ENCODE measurements at regions of chr3 and their contacts with region 1.

Region 1: GRCh38 chr3:11379233-11379823 is 107.1 kb downstream of the ATG7 start:
- DNase-seq: no peak
- H3K4me3 ChIP-seq: no peak overlapping the region
- CTCF ChIP-seq: peak; percentile 22

Region 2: GRCh38 chr3:11116336-11117059 is 262.8 kb before region 1 on chr3:
- CTCF ChIA-PET with region 1: no interaction called
- POLR2A ChIA-PET with region 1: no interaction called
- DNase-seq: no peak
- H3K4me3 ChIP-seq: no peak overlapping the region
- CTCF ChIP-seq: no peak

Region 3: DNA sequence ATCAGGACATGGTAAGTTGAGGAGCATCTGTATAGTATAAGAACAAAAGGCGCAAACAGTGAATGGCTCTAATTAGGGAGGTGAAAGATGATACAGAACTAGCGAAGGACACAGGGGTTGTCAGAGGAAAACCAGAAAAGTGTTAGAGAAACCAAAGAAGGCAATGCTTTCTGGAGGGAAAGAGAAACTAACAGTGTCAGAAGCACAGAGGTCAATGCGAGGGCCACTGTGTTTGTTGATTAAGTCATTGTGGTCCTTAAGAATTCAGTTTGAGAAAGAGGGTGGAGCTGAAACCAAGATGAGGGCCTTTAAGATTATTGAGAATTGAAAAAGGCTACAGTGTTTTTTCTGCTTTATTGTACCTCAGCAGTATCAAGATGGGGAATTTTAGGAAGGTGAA is 78.4 kb before region 1 on chr3:
- CTCF ChIA-PET with region 1: no interaction called
- POLR2A ChIA-PET with region 1: no interaction called
- DNase-seq: no peak
- H3K4me3 ChIP-seq: no peak overlapping the region
- CTCF ChIP-seq: no peak

Region 4: DNA sequence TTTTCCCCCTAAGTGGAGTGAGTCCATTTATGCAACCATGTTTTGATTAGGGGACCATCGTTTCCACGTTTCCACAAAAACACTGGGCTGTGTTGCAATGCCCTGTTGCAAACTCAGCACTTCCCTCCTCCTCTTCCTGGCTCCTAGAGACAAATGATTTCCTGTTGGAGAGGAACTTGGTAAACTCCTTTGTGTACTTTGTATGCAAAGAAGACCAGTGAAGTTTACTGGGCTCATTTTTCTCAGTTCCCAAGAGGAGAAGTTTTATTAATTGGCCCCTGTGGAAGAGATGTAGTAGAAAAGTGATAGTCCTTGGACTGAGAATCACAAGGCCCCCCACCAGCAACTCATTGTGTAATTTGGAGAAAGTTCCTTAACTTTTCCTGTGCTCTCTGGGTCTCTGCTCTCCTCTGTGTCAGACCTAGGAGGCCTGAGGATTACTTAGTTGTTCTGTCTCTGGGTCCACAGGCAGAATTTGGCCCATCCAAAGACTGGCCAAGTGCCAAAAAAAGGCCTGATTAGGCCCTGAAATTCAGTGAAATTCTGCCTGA is 12.1 kb before region 1 on chr3:
- CTCF ChIA-PET with region 1: interaction called, 28 read pairs
- POLR2A ChIA-PET with region 1: no interaction called
- DNase-seq: no peak
- H3K4me3 ChIP-seq: no peak overlapping the region
- CTCF ChIP-seq: no peak

Region 5: GRCh38 chr3:11509173-11510000 is 130.1 kb after region 1 on chr3:
- CTCF ChIA-PET with region 1: interaction called, 10 read pairs
- POLR2A ChIA-PET with region 1: no interaction called
- DNase-seq: peak; percentile 82
- H3K4me3 ChIP-seq: no peak overlapping the region
- CTCF ChIP-seq: no peak

Region 6: DNA sequence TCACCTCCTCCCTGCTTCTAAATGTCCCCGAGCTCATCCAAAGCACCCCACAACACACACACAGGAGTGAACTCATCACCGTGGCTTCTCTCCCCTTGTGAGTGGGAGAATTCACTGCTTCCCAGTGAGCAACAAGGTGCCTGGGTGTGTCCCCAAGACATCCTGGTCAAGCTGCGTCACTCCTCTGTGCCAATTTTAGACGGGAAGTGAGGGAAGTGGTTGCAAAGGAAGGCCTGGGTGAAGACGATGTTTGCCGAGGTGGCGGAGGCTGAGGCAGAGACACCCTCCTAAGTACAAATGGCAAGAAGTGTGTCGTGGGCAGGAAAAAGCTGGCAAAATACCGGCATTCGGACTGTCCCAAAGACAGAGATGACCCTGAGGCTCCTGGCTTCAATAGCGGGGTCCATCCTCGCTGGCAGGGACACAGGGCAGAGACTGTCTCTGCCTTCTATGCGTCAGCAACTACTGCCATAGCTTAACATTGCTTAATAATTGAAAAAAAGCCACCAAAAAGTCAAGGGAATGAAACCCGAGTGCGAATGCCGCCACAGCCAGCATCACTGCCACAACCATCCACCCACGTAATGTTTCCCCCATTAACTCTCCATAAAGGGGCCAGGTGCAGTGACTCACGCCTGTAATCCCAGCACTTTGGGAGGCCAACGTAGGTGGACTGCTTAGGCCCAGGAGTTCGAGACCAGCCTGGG is 191.6 kb after region 1 on chr3:
- CTCF ChIA-PET with region 1: interaction called, 10 read pairs
- POLR2A ChIA-PET with region 1: interaction called, 3 read pairs
- DNase-seq: no peak
- H3K4me3 ChIP-seq: no peak overlapping the region
- CTCF ChIP-seq: no peak

Region 7: DNA sequence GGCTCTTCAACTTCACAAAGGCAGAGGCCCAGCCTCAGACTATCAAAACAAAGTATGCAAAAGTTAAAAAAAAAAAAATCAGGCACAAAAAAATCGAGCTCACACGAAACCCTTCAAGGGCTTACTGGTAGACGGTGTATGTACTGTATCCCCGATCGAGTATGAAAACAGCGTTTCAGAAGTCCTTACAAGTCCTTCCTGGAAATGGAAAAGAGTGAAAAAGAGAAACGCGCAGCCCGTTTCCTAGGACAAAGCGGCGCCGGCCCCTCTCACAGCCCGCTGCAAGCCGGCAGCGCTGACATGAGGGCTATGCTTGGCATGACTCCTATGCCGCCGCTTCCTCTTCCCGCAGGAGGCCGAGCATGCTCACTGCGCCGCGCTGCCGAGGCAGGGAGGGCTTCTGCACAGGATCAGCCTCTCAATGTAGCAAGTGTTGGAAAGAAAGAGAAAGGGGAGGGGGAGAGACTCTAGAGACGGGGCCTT is 264.3 kb after region 1 on chr3 and contains the start of gene VGLL4:
- CTCF ChIA-PET with region 1: interaction called, 260 read pairs
- POLR2A ChIA-PET with region 1: interaction called, 3 read pairs
- DNase-seq: peak; percentile 68
- H3K4me3 ChIP-seq: peak within 1 kb of the TSS; percentile 93
- CTCF ChIP-seq: peak; percentile 9

Region 8: DNA sequence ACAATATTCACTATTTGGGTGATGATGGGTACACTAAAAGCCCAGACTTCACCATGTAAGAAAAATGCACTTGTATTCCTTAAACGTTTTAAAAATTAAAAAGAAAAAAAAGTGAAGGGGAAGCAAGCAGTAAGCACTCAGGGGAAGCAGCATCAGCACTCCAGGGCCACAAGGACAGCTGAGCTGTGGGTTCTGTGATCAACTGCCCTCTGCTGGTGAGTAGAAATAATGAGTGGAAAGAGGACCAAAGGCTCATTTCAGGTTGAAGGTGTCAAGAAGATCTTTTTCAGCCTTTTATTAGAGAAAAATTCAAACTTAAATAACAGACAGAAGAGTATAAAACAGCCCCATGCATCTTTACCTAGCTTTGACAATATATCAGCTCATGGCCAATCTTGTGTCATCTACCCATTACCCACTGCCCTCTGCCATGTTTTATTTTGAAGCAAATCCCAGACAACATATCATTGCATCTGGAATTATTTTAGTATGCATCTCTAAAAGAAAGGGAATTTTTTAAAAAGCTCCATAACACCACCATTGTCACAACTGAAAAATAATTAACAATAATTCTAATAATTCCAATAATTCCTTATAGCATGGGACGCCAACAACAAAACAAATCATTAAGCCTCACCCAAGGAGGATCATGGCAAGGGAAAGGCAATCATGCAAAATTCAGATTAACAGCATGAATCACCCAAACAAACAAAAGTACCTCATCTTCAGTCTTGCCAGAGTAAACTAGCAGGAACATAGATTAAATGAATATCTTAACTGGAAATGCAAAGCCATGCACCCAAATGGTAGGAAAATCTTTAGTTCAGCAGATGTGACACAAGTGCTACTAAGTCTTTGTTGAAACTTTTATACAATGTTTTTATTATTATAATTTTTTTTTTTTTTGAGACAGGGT is 424.9 kb after region 1 on chr3:
- CTCF ChIA-PET with region 1: interaction called, 64 read pairs
- POLR2A ChIA-PET with region 1: no interaction called
- DNase-seq: no peak
- H3K4me3 ChIP-seq: no peak overlapping the region
- CTCF ChIP-seq: peak; percentile 67

Region 9: GRCh38 chr3:11835028-11835639 is 455.8 kb after region 1 on chr3:
- CTCF ChIA-PET with region 1: interaction called, 44 read pairs
- POLR2A ChIA-PET with region 1: no interaction called
- DNase-seq: no peak
- H3K4me3 ChIP-seq: no peak overlapping the region
- CTCF ChIP-seq: peak; percentile 11

Measured in AG04449 (cell line).